ENCODE measurements at regions of chr7 and their contacts with region 1.

Region 1: DNA sequence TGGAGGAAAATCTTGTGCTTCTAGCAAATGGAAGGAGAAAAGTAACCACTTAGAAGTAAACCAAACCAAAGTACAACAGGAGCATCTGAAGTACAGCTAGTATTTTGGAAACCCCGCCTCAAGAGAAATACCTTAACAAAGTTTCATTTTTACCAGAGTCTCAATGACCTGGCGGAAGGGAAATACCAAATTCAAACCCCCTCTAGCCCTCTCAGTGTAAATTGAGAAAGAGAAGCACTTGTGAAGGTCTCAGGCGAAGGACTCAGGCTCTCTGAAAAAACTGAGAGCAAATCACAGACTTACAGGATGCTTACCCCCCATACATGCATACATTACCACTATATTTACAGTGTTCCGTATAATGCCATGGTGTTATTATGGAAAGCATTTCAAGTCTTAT is 70.1 kb downstream of the ZPBP start:
- DNase-seq: no peak

Region 2: GRCh38 chr7:49776994-49777393 is 246.0 kb before region 1 on chr7:
- intact Hi-C with region 1: no loop called
- DNase-seq: no peak

Region 3: GRCh38 chr7:50321487-50322067 is 298.6 kb after region 1 on chr7:
- intact Hi-C with region 1: loop called (anchors 5 kb)
- DNase-seq: no peak

Measured in cardiac septum (tissue), 1 donor.